B cell (primary cell): ENCODE measurements at regions of chr19 and their contacts with region 1.

Region 1: DNA sequence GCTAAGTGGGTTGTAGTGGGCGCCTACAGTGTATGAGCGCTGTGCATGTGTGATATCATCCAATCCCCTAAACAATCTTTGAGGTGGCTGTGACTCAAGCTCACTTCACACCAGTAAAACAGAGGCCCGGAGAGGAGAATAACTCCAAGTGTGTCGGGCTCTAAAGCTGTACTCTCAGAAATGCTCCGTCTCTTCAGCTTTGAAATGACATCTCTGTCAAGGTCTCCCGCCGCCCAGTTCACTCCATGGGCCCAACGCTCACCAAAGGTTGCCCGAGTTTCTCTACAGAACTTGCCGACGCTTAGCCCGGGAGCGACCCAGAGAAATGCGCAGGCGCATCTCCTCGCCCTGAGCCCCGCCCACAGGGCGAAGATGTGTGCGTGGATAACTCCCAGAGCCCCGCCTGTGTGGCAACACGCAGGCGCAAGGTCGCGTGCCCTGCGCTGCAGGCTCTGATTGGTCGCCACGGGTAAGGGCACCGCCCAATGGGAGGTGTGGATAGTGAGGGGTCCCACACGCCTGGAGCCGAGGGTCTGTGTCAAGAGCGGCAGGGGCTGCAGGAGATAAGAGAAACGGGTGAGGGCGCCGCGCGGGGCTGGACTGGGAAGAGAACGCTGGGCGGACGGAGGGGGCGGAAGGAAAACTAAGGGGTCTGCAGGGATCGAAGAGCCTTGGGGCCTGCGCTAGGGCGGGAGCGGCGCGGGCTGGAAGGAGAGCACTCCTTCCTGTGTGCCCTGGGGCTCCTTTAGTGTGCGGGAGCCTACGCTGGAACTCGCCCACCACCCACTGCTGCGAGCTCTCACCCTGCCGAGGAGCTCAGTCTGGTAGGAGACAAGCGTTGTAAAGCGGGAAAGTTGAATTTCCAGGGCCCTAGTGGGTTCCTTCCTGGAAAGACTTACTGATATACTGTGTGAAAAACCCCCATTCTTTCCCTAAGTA is at the start of gene ZNF526:
- DNase-seq: peak; percentile 97
- ATAC-seq: peak; percentile 82
- H3K4me3 ChIP-seq: peak within 1 kb of the TSS; percentile 72 to 96 (median 85)
- H3K4me3 Mint-ChIP-seq: peak within 1 kb of the TSS; percentile 96
- H3K27ac ChIP-seq: peak within 1 kb of the TSS; percentile 66 to 88
- H3K27ac Mint-ChIP-seq: peak within 1 kb of the TSS; percentile 92
- H3K4me1 ChIP-seq: peaks cover 41 to 51% of the 10 kb centered on the region in 2 donors
- H3K4me1 Mint-ChIP-seq: peaks cover 59% of the 10 kb centered on the region
- H3K27me3 ChIP-seq: no peaks in the 10 kb centered on the region
- H3K27me3 Mint-ChIP-seq: no peaks in the 10 kb centered on the region
- CTCF ChIP-seq: no peak
- total RNA-seq, gene ZNF526: 19.0 and 21.3 TPM in 2 replicates

Region 2: DNA sequence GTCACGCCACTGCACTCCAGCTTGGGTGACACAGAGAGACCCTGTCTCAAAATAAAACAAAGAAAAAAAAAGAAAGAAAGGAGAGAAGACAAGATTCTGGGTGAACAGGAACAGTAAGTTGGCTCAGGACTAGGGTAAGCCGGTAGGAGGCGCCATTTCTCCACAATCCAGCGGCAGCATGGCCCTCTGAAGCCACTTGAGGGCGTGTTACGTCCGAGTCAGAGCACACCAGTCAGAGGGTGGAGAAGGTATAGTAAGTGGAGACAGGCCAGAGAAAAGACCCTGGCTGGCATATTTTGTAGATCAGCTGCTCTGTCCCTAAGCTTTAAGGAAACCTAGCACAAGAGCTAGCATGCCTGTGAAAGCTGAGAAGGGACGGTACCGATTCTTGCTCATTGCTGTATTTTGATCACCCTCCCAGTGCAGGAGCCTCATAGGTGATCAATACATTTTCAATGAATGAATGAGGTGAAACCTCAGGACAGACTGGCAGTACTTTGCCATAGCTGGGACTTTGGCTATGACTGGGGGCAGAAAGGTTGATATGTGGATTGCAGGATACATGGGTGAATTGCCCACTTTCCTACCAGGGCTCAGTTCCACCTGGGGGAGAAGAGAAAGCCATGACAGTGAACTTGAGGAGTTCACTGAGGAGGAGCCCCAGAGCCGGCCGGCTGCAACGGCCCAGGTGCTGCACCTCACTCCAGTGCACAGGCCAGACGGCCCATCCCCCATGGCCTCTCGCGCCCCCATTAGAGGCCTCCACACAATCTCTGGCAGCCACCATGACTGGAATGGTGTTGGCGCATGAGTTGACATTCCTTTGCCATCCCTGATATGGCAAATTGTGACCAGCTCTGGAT is 111.3 kb before region 1 on chr19:
- CTCF ChIA-PET with region 1: interaction called, 6 read pairs
- POLR2A ChIA-PET with region 1: no interaction called
- intact Hi-C with region 1: loop called (anchors 1 kb)
- DNase-seq: peak; percentile 92
- ATAC-seq: peak; percentile 98
- H3K4me3 ChIP-seq: no peak overlapping the region
- H3K4me3 Mint-ChIP-seq: peak overlapping the region; percentile 24
- H3K27ac ChIP-seq: peak overlapping the region in 1 of 2 donors; percentile 58
- H3K27ac Mint-ChIP-seq: peak overlapping the region; percentile 71
- H3K4me1 ChIP-seq: peaks cover 33 to 53% of the 10 kb centered on the region in 2 donors
- H3K4me1 Mint-ChIP-seq: peaks cover 57% of the 10 kb centered on the region
- H3K27me3 ChIP-seq: no peaks in the 10 kb centered on the region
- H3K27me3 Mint-ChIP-seq: no peaks in the 10 kb centered on the region
- CTCF ChIP-seq: peak; percentile 100

Region 3: GRCh38 chr19:42199440-42200115 is 20.5 kb before region 1 on chr19:
- CTCF ChIA-PET with region 1: interaction called, 25 read pairs
- POLR2A ChIA-PET with region 1: interaction called, 4 read pairs
- intact Hi-C with region 1: loop called (anchors 1 kb)
- DNase-seq: peak; percentile 70
- ATAC-seq: peak; percentile 37
- H3K4me3 ChIP-seq: peak overlapping the region; percentile 27 to 54 (median 44)
- H3K4me3 Mint-ChIP-seq: peak overlapping the region; percentile 77
- H3K27ac ChIP-seq: peak overlapping the region; percentile 91 to 94
- H3K27ac Mint-ChIP-seq: peak overlapping the region; percentile 92
- H3K4me1 ChIP-seq: peaks cover 70 to 84% of the 10 kb centered on the region in 2 donors
- H3K4me1 Mint-ChIP-seq: peaks cover 82% of the 10 kb centered on the region
- H3K27me3 ChIP-seq: no peaks in the 10 kb centered on the region
- H3K27me3 Mint-ChIP-seq: no peaks in the 10 kb centered on the region
- CTCF ChIP-seq: peak; percentile 32

Region 4: GRCh38 chr19:42268704-42269477 is 48.8 kb after region 1 on chr19 and contains the start of gene CIC:
- CTCF ChIA-PET with region 1: interaction called, 3 read pairs
- POLR2A ChIA-PET with region 1: no interaction called
- intact Hi-C with region 1: loop called (anchors 1 kb)
- DNase-seq: peak; percentile 100
- ATAC-seq: peak; percentile 76
- H3K4me3 ChIP-seq: peak within 1 kb of the TSS; percentile 74 to 95 (median 90)
- H3K4me3 Mint-ChIP-seq: peak within 1 kb of the TSS; percentile 88
- H3K27ac ChIP-seq: peak within 1 kb of the TSS; percentile 98 to 100
- H3K27ac Mint-ChIP-seq: peak within 1 kb of the TSS; percentile 96
- H3K4me1 ChIP-seq: peaks cover 26 to 32% of the 10 kb centered on the region in 2 donors
- H3K4me1 Mint-ChIP-seq: peaks cover 24% of the 10 kb centered on the region
- H3K27me3 ChIP-seq: no peaks in the 10 kb centered on the region
- H3K27me3 Mint-ChIP-seq: no peaks in the 10 kb centered on the region
- CTCF ChIP-seq: no peak
- total RNA-seq, gene CIC: 119 and 123 TPM in 2 replicates